ENCODE measurements at regions of chr11 and their contacts with region 1.

Region 1: DNA sequence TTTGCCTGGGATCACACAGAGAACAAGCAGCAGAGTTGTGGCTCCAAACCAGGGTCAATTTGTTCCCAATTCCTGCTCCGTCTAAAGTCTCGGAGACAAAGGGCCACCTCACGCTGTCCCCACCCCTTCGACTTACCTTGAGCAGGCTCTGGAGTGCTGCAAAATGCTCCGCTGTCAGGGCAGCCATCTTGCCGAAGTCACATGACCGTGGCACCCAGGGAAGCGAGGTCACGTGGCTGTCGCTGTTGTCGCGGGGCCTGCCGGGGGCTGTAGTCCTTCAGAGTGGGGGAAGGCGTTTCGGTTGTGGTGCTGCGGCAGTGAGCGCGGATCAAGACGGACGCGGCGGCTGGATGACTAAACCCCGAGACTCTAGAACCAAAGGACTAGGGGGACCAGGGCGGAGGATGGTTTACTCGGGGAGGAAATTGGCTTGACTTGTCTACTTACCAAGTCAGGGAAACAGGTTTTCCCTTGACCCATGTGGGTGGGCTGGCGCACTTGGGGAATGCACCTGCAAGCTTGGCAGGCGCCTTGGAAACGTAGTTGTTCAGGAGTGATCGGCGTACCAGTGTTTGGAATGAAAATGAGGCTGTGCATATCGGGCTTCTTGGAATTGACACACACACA is at the start of gene COMMD9:
- DNase-seq: peak; percentile 98
- ATAC-seq: peak; percentile 99
- H3K4me3 Mint-ChIP-seq: peak within 1 kb of the TSS; percentile 83
- H3K27ac Mint-ChIP-seq: peak within 1 kb of the TSS; percentile 90
- H3K4me1 Mint-ChIP-seq: peaks cover 34% of the 10 kb centered on the region
- H3K27me3 Mint-ChIP-seq: no peaks in the 10 kb centered on the region
- total RNA-seq, gene COMMD9: 33.0 to 44.6 TPM

Region 2: GRCh38 chr11:36312611-36313472 is 23.5 kb after region 1 on chr11:
- CTCF ChIA-PET with region 1: no interaction called
- POLR2A ChIA-PET with region 1: no interaction called
- intact Hi-C with region 1: no loop called
- DNase-seq: no peak
- ATAC-seq: peak; percentile 60
- H3K4me3 Mint-ChIP-seq: no peak overlapping the region
- H3K27ac Mint-ChIP-seq: no peak overlapping the region
- H3K4me1 Mint-ChIP-seq: peaks cover 16% of the 10 kb centered on the region
- H3K27me3 Mint-ChIP-seq: peaks cover 21% of the 10 kb centered on the region

Region 3: GRCh38 chr11:36354221-36355003 is 65.1 kb after region 1 on chr11:
- CTCF ChIA-PET with region 1: interaction called, 10 read pairs
- POLR2A ChIA-PET with region 1: no interaction called
- intact Hi-C with region 1: loop called (anchors 1 to 5 kb)
- DNase-seq: no peak
- ATAC-seq: peak; percentile 54
- H3K4me3 Mint-ChIP-seq: peak overlapping the region; percentile 28
- H3K27ac Mint-ChIP-seq: peak overlapping the region; percentile 77
- H3K4me1 Mint-ChIP-seq: peaks cover 73% of the 10 kb centered on the region
- H3K27me3 Mint-ChIP-seq: peaks cover 6% of the 10 kb centered on the region

Region 4: DNA sequence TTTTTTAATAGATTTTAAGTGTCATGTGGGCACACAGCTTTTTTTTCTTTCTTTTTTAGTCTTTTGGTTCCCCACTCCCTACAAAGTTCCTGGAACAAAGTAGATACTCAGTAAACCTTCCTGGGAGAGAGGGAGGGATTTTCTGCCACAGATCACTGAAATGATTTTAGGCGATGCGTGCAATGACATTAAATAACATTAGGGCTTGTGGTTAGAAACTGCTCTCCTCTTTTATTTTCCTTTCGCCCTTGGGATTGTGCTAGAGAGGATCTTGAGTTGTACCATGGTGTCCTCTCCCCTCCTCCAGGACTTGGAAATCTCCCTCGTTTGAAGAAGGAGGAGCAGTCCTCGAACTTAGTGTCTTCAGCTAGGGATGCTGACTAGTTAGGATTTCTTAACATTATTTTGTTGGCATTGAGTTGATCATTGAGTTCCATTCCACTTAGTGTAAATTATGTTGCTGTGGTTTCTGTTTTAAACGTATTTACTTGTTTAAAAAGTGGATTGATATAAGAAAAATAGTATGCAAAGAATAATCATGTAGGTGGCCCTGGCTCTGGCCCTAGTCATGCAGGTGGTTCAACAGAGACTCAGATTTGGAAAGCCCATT is 132.3 kb after region 1 on chr11:
- CTCF ChIA-PET with region 1: interaction called, 5 read pairs
- POLR2A ChIA-PET with region 1: no interaction called
- intact Hi-C with region 1: loop called in 1 of 2 experiments (anchors 5 kb)
- DNase-seq: no peak
- ATAC-seq: no peak
- H3K4me3 Mint-ChIP-seq: peak overlapping the region; percentile 41
- H3K27ac Mint-ChIP-seq: peak overlapping the region; percentile 94
- H3K4me1 Mint-ChIP-seq: peaks cover 54% of the 10 kb centered on the region
- H3K27me3 Mint-ChIP-seq: peaks cover 7% of the 10 kb centered on the region

Region 5: GRCh38 chr11:36492724-36493304 is 203.5 kb after region 1 on chr11:
- CTCF ChIA-PET with region 1: interaction called, 144 read pairs
- POLR2A ChIA-PET with region 1: interaction called, 4 read pairs
- intact Hi-C with region 1: loop called (anchors 1 kb)
- DNase-seq: peak; percentile 41
- ATAC-seq: peak; percentile 74
- H3K4me3 Mint-ChIP-seq: no peak overlapping the region
- H3K27ac Mint-ChIP-seq: peak overlapping the region; percentile 24
- H3K4me1 Mint-ChIP-seq: peaks cover 23% of the 10 kb centered on the region
- H3K27me3 Mint-ChIP-seq: no peaks in the 10 kb centered on the region

Region 6: GRCh38 chr11:36541001-36541400 is 251.7 kb after region 1 on chr11:
- CTCF ChIA-PET with region 1: interaction called, 3 read pairs
- POLR2A ChIA-PET with region 1: no interaction called
- intact Hi-C with region 1: loop called in 1 of 2 experiments (anchors 1 kb)
- DNase-seq: peak; percentile 65
- ATAC-seq: peak; percentile 87
- H3K4me3 Mint-ChIP-seq: no peak overlapping the region
- H3K27ac Mint-ChIP-seq: no peak overlapping the region
- H3K4me1 Mint-ChIP-seq: no peaks in the 10 kb centered on the region
- H3K27me3 Mint-ChIP-seq: peaks cover 2% of the 10 kb centered on the region

Region 7: GRCh38 chr11:36746886-36747710 is 457.8 kb after region 1 on chr11:
- CTCF ChIA-PET with region 1: interaction called, 7 read pairs
- POLR2A ChIA-PET with region 1: no interaction called
- intact Hi-C with region 1: loop called in 1 of 2 experiments (anchors 1 kb)
- DNase-seq: peak; percentile 90
- ATAC-seq: peak; percentile 99
- H3K4me3 Mint-ChIP-seq: no peak overlapping the region
- H3K27ac Mint-ChIP-seq: no peak overlapping the region
- H3K4me1 Mint-ChIP-seq: peaks cover 8% of the 10 kb centered on the region
- H3K27me3 Mint-ChIP-seq: peaks cover 27% of the 10 kb centered on the region

Measured in activated CD4-positive, alpha-beta T cell treated with anti-CD3 and anti-CD28 coated beads for 36 hours (primary cell).